Posterior vena cava (tissue), 2 donors: ENCODE measurements at regions of chr10 and their contacts with region 1.

Region 1: DNA sequence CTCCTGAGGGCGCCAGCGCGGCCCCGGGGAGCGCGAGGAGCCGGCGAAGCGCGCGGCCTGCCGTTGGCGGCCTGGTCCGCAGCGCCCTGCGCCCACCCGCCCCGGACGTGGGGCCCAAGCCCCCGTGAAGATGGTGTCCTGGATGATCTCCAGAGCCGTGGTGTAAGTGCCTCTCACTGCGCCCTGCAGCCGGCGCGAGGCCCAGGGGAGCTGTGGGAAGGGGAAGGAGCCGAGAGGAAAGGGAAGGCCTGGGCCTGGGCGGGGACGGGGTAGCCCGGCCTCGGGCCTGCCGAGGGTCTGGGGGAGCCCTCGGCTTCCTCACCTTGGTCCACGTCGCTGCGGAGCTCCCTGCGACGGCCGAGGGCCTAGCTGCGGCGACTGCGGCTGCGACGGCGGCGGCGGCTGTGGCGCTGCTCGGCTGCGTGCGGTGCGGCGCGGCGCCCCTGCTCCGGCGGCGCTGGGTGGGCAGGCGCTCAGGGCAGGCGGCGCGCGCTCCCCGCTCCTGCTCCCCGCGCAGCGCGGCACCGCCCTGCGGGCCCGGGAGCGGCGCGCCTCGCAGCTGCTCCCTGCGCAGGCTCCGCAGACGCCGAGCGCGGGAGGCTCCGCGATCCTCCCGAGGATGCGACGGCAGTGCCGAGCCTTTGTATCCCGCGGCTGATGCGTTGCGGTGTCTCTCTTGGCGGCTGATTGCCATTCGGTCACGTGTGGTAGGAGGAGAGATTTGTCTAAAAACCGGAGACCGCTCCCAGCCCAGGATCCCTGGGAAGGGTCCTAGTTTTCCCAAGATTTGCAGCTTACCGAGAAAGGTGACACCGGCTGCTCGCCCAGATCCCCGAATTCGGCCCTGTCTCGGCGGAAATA is 445 bp downstream of the REEP3 start:
- DNase-seq: peak; percentile 87

Region 2: GRCh38 chr10:63465293-63466143 is 56.1 kb before region 1 on chr10 and contains the start of gene JMJD1C:
- intact Hi-C with region 1: loop called in 1 of 2 experiments (anchors 10 kb)
- DNase-seq: peak; percentile 94
- total RNA-seq, gene JMJD1C: 84.1 to 91.1 TPM

Region 3: GRCh38 chr10:63573068-63573697 is 51.5 kb after region 1 on chr10:
- intact Hi-C with region 1: loop called in 1 of 2 experiments (anchors 1 kb)
- DNase-seq: no peak

Region 4: DNA sequence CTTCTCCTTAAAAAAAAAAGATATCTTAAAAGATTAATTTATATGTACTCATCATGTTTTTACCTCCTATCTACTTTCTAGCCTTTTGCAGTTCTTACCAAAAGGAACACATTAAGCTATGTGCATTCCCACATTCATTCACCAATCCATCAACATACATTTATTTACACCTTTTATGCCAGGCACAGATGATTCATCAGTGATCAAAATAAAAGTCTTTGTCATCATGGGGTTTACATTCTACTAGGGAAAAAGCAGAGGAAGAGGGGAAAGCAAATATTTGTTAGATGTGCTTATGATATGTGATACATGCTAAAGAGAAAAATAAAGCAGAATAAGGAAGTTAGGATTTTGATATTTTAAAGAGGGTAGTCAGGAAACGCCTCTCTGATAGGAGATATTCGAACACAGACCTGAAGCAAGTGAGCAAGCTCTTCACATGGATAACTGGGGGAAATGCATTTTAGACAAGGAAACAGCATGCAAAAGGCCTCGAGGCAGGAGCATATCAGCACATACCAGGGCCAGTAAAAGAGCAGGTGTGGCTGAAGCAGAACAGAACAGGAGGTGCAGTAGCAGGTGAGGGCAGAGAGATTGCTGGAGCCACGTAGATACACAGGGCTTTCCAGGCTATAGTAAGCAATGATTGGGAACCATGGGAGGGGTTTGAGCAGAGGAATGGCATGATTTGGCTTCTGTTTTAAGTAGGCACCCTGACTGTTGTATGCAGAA is 67.0 kb after region 1 on chr10:
- intact Hi-C with region 1: loop called in 1 of 2 experiments (anchors 10 kb)
- DNase-seq: no peak